CD8-positive, alpha-beta T cell (primary cell): ENCODE measurements at regions of chr1 and their contacts with region 1.

Region 1: GRCh38 chr1:55164906-55165305 is 50.3 kb downstream of the USP24 start:
- DNase-seq: no peak
- ATAC-seq: peak; percentile 42
- H3K4me3 ChIP-seq: no peak overlapping the region
- H3K4me3 Mint-ChIP-seq: no peak overlapping the region
- H3K27ac ChIP-seq: no peak overlapping the region
- H3K27ac Mint-ChIP-seq: peak overlapping the region; percentile 23
- H3K4me1 ChIP-seq: no peaks in the 10 kb centered on the region
- H3K4me1 Mint-ChIP-seq: peaks cover 8% of the 10 kb centered on the region
- H3K27me3 ChIP-seq: no peaks in the 10 kb centered on the region
- H3K27me3 Mint-ChIP-seq: no peaks in the 10 kb centered on the region
- CTCF ChIP-seq: no peak

Region 2: DNA sequence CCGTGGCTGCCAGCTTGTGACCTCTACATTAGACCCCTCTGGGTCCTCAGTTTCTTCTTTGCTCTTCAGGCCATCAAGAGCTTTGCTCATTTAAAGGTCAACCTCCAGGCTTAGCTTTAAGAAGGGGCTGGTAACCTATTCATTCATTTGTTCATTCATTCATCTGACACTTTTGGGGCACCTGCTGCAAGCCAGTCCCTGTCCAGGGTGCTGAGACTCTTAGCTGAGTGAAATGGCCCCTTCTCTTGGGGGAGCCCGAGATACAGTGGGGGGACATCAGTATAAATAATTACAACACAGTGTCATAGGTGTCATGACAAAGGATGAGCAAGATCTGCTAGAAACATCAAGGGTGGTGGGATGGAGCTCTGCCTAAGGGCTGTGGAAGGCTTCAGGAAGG is 459.8 kb before region 1 on chr1:
- CTCF ChIA-PET with region 1: no interaction called
- POLR2A ChIA-PET with region 1: no interaction called
- intact Hi-C with region 1: no loop called
- DNase-seq: no peak
- ATAC-seq: no peak
- H3K4me3 ChIP-seq: no peak overlapping the region
- H3K4me3 Mint-ChIP-seq: no peak overlapping the region
- H3K27ac ChIP-seq: no peak overlapping the region
- H3K27ac Mint-ChIP-seq: no peak overlapping the region
- H3K4me1 ChIP-seq: no peaks in the 10 kb centered on the region
- H3K4me1 Mint-ChIP-seq: no peaks in the 10 kb centered on the region
- H3K27me3 ChIP-seq: no peaks in the 10 kb centered on the region
- H3K27me3 Mint-ChIP-seq: peaks cover 27% of the 10 kb centered on the region
- CTCF ChIP-seq: no peak

Region 3: GRCh38 chr1:54934869-54935268 is 230.0 kb before region 1 on chr1:
- CTCF ChIA-PET with region 1: no interaction called
- POLR2A ChIA-PET with region 1: no interaction called
- intact Hi-C with region 1: no loop called
- DNase-seq: no peak
- ATAC-seq: no peak
- H3K4me3 ChIP-seq: no peak overlapping the region
- H3K4me3 Mint-ChIP-seq: no peak overlapping the region
- H3K27ac ChIP-seq: no peak overlapping the region
- H3K27ac Mint-ChIP-seq: no peak overlapping the region
- H3K4me1 ChIP-seq: peaks cover 9% of the 10 kb centered on the region
- H3K4me1 Mint-ChIP-seq: peaks cover 10% of the 10 kb centered on the region
- H3K27me3 ChIP-seq: no peaks in the 10 kb centered on the region
- H3K27me3 Mint-ChIP-seq: peaks cover 21% of the 10 kb centered on the region
- CTCF ChIP-seq: no peak

Region 4: GRCh38 chr1:55146781-55147180 is 18.1 kb before region 1 on chr1:
- CTCF ChIA-PET with region 1: interaction called, 4 read pairs
- POLR2A ChIA-PET with region 1: interaction called, 4 read pairs
- intact Hi-C with region 1: loop called in 1 of 2 experiments (anchors 2 kb)
- DNase-seq: peak in 1 of 9 experiments; percentile 15
- ATAC-seq: no peak
- H3K4me3 ChIP-seq: no peak overlapping the region
- H3K4me3 Mint-ChIP-seq: no peak overlapping the region
- H3K27ac ChIP-seq: no peak overlapping the region
- H3K27ac Mint-ChIP-seq: peak overlapping the region; percentile 23
- H3K4me1 ChIP-seq: peaks cover 12% of the 10 kb centered on the region
- H3K4me1 Mint-ChIP-seq: peaks cover 15% of the 10 kb centered on the region
- H3K27me3 ChIP-seq: no peaks in the 10 kb centered on the region
- H3K27me3 Mint-ChIP-seq: no peaks in the 10 kb centered on the region
- CTCF ChIP-seq: no peak